Right ventricle myocardium inferior (tissue), 1 donor: ENCODE measurements at regions of chr12 and their contacts with region 1.

Region 1: GRCh38 chr12:591167-592023 is 71.8 kb downstream of the NINJ2 start:
- DNase-seq: peak; percentile 90
- ATAC-seq: peak; percentile 92

Region 2: DNA sequence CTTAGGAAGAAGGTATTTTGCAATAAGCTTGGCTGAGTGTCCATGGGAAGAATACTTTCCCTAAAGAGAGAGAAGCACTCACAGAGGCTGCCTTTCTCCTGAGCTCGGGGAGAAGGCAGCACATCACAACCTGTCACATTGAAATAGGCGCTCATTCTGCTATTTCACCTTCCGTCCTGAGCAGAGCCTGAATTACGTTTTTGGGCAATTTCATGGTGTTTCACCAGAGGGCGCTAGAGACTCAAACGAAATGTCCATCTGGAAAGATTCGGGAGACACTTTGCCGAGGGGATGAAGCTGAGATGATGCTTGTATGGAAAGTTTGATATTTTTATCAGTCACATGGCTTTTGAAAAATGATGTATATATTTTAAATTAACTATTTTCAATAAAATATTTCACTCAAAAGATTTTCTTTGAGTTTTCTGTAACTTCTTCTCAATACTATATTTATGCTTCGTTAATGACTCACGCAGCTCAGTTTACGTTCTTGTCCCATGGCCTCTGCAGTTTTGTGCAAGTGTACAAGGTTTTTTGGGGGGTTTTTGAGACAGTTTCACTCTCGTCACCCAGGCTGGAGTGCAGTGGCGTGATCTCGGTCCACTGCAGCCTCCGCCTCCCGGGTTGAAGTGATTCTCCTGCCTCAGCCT is 149.0 kb before region 1 on chr12:
- intact Hi-C with region 1: no loop called
- DNase-seq: no peak
- ATAC-seq: peak; percentile 34

Region 3: DNA sequence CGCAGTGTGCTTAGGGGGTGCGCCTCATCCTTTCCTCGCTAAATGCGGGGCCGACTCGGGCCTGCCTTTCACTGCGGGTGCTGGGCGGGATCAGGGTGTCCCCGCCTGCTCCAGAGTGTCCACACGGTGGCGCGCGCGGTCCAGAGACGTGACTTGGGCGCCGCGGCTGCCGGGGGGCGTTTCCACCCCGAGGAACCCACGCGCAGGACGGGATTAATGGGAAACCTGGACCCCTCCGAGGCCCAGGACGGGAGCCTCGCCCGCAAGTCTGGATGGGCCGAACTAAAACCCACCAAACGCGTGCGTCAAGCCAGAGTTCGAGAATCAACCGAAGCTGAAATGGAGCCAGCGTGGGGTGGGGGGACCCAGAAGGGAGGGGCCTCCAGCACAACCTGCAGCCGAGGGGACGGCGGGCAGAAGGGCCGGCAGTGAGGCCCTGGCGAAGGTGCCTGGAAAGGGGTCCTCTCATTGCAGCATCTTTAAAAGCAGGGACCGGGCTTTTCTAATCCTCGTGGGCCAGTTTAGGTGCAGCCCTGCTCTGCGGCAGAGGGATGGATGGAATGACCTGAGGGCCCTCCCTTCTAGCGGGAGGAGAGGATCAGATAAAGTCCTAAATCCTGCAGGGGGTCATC is 21.5 kb before region 1 on chr12:
- intact Hi-C with region 1: no loop called
- DNase-seq: peak; percentile 96
- ATAC-seq: peak; percentile 75

Region 4: DNA sequence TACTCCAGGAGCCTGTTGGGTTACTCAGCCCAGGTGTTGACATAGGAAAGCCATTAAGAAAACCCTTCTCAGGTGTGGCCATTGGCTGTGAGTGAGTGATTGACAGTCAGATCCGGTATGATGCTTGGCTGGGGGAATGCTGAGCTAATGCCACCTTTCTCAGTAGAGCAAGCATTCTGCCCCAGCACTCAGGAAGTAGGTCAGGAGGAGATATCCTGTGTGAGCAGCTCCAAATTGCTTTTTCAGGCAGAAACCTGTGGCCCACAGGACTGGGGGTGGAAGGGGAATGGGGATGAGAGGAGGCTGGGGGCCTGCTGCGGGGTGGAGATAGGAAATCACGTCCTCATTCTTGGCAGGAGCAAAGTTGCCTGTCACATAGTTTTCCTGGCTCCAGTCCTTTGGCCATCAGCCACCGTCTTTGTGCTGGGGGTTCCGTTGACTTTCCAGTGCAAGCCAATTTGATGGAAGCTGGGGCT is 16.2 kb after region 1 on chr12:
- intact Hi-C with region 1: loop called (anchors 2 kb)
- DNase-seq: no peak
- ATAC-seq: peak; percentile 45

Region 5: GRCh38 chr12:614411-614970 is 23.1 kb after region 1 on chr12:
- intact Hi-C with region 1: loop called (anchors 2 kb)
- DNase-seq: no peak
- ATAC-seq: no peak

Region 6: GRCh38 chr12:622416-622815 is 31.0 kb after region 1 on chr12:
- intact Hi-C with region 1: loop called (anchors 2 kb)
- DNase-seq: no peak
- ATAC-seq: no peak

Region 7: DNA sequence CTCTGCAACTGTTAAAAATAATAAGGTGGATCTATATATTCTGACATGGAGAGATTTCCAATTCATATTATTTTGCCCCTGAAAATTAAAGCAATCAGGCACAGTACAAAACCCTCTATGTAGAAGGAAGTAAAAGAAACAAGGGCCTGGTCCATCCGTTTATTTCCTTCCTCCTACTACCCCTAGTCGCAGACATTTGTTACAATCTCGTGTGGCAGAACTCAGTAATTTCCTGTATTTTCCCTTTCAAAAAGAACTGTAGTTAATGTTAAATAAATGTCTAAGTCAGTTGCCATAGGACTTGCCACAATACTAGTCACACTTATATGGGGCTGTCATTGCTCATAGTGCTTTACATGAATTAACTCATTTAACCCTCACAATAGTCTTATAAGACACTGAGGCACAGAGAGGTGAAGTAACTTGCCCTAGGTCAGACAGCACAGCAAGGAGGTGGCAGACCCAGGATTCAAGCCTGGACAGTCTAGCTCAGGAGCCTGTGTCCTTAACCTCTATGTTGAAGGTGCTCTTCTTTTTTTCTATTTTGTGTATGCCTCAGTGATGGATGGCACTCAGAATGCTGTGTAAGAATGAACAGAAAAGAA is 47.7 kb after region 1 on chr12:
- intact Hi-C with region 1: no loop called
- DNase-seq: no peak
- ATAC-seq: no peak

Region 8: DNA sequence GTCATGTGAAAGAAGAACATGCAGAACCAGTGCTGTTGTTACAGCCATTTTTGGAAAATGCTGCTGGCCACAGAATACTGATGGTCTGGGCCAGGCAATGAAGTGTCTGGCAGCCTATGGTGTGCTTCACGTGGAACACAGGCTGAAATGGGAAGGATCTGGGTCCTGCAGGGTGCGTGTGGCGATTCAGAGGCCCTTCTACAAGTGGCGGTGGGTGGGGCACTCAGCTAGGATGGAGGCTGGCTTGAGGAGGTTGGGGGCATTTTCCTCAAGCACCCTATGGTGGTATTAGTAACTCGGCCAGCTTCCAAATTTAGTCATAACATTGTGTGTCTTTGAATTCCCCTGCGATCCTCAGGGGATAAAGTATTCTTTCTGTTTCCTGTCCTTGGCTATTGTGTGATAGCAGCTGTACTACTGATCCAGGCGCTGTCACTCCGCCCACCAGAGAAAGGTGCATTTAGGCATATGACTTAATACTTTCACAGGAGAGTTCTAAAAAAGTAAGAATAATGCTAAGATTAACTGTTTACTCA is 367.3 kb after region 1 on chr12:
- intact Hi-C with region 1: no loop called
- DNase-seq: no peak
- ATAC-seq: no peak